ENCODE measurements at regions of chr3 and their contacts with region 1.

Region 1: GRCh38 chr3:138915503-138916498 is 31.1 kb downstream of the FOXL2 start:
- DNase-seq: no peak
- H3K4me3 ChIP-seq: peak overlapping the region; percentile 73
- H3K27me3 ChIP-seq: peaks cover 2% of the 10 kb centered on the region; the same call in 1 of the 2 replicates
- CTCF ChIP-seq: peak; percentile 91

Region 2: GRCh38 chr3:138417559-138417982 is 498.2 kb before region 1 on chr3:
- CTCF ChIA-PET with region 1: interaction called, 78 read pairs
- POLR2A ChIA-PET with region 1: no interaction called
- DNase-seq: no peak
- H3K4me3 ChIP-seq: no peak overlapping the region
- H3K27me3 ChIP-seq: no peaks in the 10 kb centered on the region
- CTCF ChIP-seq: peak; percentile 98

Region 3: DNA sequence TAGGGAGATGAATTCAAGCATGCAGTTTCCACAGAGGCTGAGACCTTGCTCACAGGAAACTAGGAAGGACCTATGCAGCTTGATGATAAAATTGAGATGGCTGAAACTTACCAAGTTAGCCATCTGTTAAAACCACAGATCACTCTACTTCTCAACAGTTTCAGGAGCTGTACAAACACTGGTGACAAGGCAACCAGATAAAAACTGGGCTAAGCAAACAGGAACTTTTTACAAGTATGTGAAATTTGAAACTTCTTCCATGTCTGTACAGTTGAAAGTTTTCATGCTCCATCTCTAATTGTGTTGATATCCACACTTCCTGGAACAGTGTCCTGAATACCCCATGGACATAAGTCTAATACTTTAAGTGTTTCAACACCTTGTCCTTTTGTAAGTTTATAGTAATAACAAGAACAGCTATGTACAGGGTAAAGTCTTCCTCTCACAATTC is 229.0 kb before region 1 on chr3:
- CTCF ChIA-PET with region 1: interaction called, 13 read pairs
- POLR2A ChIA-PET with region 1: no interaction called
- DNase-seq: peak; percentile 71
- H3K4me3 ChIP-seq: no peak overlapping the region
- H3K27me3 ChIP-seq: no peaks in the 10 kb centered on the region
- CTCF ChIP-seq: no peak

Region 4: GRCh38 chr3:138726946-138727730 is 188.7 kb before region 1 on chr3:
- CTCF ChIA-PET with region 1: interaction called, 11 read pairs
- POLR2A ChIA-PET with region 1: no interaction called
- DNase-seq: no peak
- H3K4me3 ChIP-seq: no peak overlapping the region
- H3K27me3 ChIP-seq: no peaks in the 10 kb centered on the region
- CTCF ChIP-seq: no peak

Region 5: GRCh38 chr3:138761002-138761401 is 154.8 kb before region 1 on chr3:
- CTCF ChIA-PET with region 1: no interaction called
- POLR2A ChIA-PET with region 1: no interaction called
- DNase-seq: no peak
- H3K4me3 ChIP-seq: no peak overlapping the region
- H3K27me3 ChIP-seq: no peaks in the 10 kb centered on the region
- CTCF ChIP-seq: no peak

Region 6: GRCh38 chr3:138881233-138881632 is 34.6 kb before region 1 on chr3:
- CTCF ChIA-PET with region 1: interaction called, 15 read pairs
- POLR2A ChIA-PET with region 1: no interaction called
- DNase-seq: no peak
- H3K4me3 ChIP-seq: no peak overlapping the region
- H3K27me3 ChIP-seq: no peaks in the 10 kb centered on the region
- CTCF ChIP-seq: no peak

Region 7: GRCh38 chr3:139052802-139053600 is 137.2 kb after region 1 on chr3:
- CTCF ChIA-PET with region 1: no interaction called
- POLR2A ChIA-PET with region 1: no interaction called
- DNase-seq: no peak
- H3K4me3 ChIP-seq: no peak overlapping the region
- H3K27me3 ChIP-seq: no peaks in the 10 kb centered on the region
- CTCF ChIP-seq: no peak

Measured in BJ (cell line).